Right ventricle myocardium superior (tissue), 1 donor: ENCODE measurements at regions of chr3 and their contacts with region 1.

Region 1: DNA sequence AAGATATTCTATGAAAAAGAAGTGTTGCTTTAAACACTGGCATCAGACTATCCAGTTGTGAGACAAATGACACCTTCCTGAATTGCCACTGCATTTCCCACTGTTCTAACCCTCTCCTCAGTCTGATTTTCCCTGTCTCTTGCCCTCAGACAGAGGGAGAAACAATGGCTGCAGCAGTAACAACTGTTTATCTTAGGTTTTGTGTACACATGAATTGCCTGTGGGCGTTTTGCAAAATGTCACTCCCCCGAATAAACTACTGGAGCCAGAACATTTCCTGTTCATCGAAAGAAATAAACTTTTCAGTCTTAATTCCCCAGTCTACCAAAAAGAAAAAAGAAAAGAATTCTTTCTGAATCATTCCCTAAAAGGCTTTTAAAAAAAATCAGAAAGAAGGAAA is 155.1 kb downstream of the MAGI1 start:
- DNase-seq: no peak
- ATAC-seq: no peak

Region 2: DNA sequence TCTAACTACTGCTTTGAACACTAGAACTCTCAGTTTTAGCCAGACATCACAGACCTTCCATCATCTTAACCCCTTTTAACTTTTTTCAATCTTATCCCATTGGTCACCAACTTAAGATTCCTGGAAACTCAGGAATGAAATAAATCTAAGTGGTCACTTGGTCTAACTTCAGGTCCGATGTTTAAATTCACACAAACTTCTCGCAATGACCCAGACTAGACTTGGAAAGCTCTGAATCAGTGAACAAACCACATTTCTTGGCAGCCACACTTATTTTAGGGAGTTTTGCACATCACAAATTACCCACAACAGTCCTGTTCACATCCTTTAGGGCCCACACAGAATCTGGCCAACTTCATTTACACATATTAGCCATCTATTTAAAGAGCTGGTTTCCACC is 36.2 kb after region 1 on chr3:
- intact Hi-C with region 1: loop called (anchors 2 kb)
- DNase-seq: no peak
- ATAC-seq: no peak